ENCODE measurements at regions of chr4 and their contacts with region 1.

Region 1: DNA sequence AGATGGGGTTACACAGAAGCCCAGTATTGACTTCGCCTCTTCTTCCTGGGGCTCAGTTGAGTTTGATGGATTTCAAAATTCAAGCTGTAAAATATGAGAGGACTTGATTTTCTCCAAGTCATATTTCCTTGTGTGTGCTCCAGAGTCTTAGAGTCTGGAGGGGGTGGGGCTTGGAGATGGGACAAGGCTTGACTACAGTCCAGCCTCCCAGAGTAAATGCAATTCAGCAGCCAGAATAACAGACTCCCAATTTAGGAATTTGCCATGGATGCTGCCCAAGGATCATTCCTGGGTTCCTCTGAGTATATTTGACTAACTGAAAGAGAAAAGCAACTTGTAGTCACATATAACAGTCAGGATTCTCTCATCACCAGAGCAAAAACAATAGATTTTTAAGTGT is 53.7 kb upstream of the RBPJ start:
- DNase-seq: peak; percentile 28 to 67
- ATAC-seq: peak; percentile 70 to 76
- H3K4me3 ChIP-seq: no peak overlapping the region
- H3K27ac ChIP-seq: peak overlapping the region in 1 of 4 donors; percentile 7
- H3K4me1 ChIP-seq: no peaks in the 10 kb centered on the region
- H3K27me3 ChIP-seq: no peaks in the 10 kb centered on the region
- CTCF ChIP-seq: no peak
- POLR2A ChIP-seq: no peak

Region 2: GRCh38 chr4:26081795-26082498 is 185.1 kb before region 1 on chr4:
- in situ Hi-C with region 1: no loop called
- intact Hi-C with region 1: loop called (anchors 5 kb)
- DNase-seq: no peak
- ATAC-seq: peak in 1 of 2 donors; percentile 35
- H3K4me3 ChIP-seq: no peak overlapping the region
- H3K27ac ChIP-seq: no peak overlapping the region
- H3K4me1 ChIP-seq: peaks cover 29 to 35% of the 10 kb centered on the region in 2 donors
- H3K27me3 ChIP-seq: no peaks in the 10 kb centered on the region
- CTCF ChIP-seq: peak; percentile 22 to 67 (median 63)
- POLR2A ChIP-seq: no peak

Region 3: DNA sequence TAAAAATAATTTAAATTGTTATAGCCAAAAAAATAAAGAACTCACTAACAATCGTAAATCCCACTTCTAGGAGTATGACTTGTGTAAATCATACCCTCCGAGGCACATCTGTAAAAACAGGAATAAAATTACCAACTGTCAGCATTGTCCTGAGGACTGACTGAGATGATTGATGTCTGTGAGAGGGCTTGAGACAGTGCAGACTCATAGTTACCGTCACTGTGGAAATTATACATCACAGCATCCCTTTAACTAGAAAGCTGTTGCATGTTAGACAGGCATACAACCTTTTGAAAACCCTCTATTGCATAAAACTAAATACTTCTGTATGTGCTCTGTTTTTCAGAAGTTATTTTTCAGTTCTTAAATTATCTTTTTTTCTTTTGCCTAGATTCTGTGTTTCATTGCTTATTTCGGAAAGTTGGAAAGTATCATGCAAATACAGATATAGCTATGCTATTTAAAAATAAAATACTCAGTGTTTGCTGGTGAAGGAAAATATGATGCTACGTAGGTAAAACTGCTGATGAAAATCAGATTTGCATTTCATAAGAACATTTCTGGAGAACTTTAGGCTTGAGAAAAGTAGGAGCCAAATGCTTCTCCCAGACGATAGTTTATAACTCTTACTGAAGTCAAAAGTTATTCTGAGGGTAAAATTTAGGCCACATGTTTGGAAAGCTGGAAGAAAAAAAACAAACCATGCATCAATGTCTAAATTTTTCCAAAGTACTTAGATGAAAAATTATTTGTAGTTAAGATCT is 40.1 kb after region 1 on chr4:
- in situ Hi-C with region 1: no loop called
- intact Hi-C with region 1: no loop called
- DNase-seq: no peak
- ATAC-seq: no peak
- H3K4me3 ChIP-seq: no peak overlapping the region
- H3K27ac ChIP-seq: no peak overlapping the region
- H3K4me1 ChIP-seq: no peaks in the 10 kb centered on the region
- H3K27me3 ChIP-seq: no peaks in the 10 kb centered on the region
- CTCF ChIP-seq: no peak
- POLR2A ChIP-seq: no peak

Region 4: DNA sequence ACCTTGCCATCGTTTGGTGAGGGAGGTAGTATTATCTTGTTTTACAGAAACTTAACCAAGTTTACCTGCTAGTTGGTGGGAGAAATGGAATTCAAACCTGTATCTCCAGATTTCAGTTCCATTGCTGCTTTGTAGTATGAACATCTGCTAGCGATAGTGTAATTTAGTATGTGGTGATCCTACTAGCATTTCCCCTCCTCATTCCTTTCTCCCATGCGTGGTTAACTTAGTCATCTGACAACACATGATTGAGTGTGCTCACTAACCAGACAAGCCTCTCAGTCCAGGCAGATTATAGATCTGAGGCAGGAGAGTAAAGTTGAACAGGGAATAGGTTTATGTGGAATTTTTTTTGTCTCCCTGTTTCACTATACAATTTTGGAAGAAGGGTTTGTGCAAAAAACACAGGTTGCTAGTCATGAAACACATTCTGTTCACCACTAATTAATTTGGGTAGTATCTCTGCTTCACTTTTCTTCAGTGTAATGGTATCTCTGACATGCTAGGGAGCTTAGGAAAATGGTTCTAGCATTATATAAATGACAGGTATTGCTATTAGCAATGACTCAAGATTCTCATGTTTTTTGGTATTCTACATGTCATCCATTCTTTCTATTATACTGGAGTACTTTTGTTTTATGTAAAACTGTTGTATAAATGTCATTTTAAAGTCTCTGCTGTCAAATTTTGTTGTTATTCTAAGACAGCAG is 75.4 kb after region 1 on chr4:
- in situ Hi-C with region 1: no loop called
- intact Hi-C with region 1: no loop called
- DNase-seq: no peak
- ATAC-seq: peak; percentile 86 to 89
- H3K4me3 ChIP-seq: no peak overlapping the region
- H3K27ac ChIP-seq: peak overlapping the region in 2 of 4 donors; percentile 8 to 22
- H3K4me1 ChIP-seq: peaks cover 31 to 51% of the 10 kb centered on the region in 2 donors
- H3K27me3 ChIP-seq: no peaks in the 10 kb centered on the region
- CTCF ChIP-seq: no peak
- POLR2A ChIP-seq: no peak

Measured in gastrocnemius medialis (tissue), 4 donors.